Heart right ventricle (tissue), 16 donors: ENCODE measurements at regions of chr2 and their contacts with region 1.

Region 1: DNA sequence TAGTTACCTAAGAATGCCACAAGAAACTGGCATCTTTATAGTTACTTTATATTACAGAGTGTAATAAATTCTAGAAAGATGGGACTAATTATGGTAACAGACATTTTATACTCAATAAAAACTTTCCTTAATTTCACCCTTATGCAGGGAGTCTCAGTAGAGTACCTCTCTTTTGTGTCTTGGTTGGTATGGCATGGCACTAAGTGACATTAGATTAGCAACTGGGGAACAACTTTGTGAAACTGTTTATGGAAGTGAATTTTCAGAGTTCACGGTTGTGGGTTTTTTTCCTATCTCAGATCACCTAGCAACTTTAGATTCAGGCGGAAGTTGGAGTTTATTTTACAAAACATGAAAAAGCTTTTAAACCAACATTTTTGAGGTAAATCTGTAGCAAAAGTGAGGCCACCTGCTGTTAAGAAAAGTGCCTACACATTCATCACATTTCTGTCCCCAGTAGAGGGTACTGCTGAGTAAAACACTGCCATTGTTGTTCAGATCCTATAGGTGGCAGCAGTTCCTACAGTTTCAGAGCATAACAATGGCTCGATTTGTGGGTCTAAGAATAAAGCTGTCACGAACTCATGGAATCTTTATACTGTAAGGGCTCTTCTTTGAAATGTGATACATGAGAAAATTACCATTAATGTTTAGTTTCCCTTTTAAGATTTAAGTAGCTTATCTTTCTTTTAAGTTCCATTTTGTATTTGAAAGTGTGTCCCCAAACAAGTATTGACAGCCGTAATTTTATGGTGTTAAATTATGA is 117.6 kb downstream of the CAMKMT start:
- DNase-seq: peak in 1 of 2 donors; percentile 51
- ATAC-seq: peak; percentile 80 to 92 (median 88)
- H3K4me3 ChIP-seq: no peak overlapping the region
- H3K27ac ChIP-seq: no peak overlapping the region
- H3K4me1 ChIP-seq: peaks cover 0 to 5% (median 0%) of the 10 kb centered on the region in 9 donors
- H3K27me3 ChIP-seq: no peaks in the 10 kb centered on the region
- CTCF ChIP-seq: peak; percentile 84 to 100 (median 98)

Region 2: GRCh38 chr2:44044281-44044720 is 435.0 kb before region 1 on chr2:
- intact Hi-C with region 1: loop called in 4 of 10 experiments (anchors 5 to 10 kb)
- DNase-seq: peak; percentile 78 to 81
- ATAC-seq: peak; percentile 79 to 98 (median 96)
- H3K4me3 ChIP-seq: no peak overlapping the region
- H3K27ac ChIP-seq: no peak overlapping the region
- H3K4me1 ChIP-seq: peaks cover 0 to 7% (median 3%) of the 10 kb centered on the region in 9 donors
- H3K27me3 ChIP-seq: peaks cover 0 to 4% (median 0%) of the 10 kb centered on the region in 7 donors
- CTCF ChIP-seq: peak; percentile 46 to 94 (median 88)

Region 3: DNA sequence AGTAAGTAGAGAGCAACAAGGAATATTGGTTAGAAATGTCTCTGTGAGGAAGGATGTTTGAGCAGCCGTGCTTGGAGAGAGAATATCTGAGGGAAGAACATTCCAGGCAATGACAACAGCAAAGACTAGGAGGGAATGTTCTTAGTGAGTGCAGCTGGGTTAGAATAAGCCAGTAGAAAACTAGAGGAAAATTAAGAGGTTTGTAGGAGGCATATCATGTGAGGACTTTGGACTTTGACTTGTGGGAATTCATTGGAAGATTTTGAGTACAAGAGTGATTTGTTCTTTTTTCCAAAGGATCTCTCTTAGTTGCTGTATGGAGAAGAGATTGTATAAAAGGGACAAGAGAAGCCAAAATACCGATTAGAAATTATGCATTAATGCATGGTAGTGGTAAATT is 263.5 kb before region 1 on chr2:
- intact Hi-C with region 1: no loop called
- DNase-seq: no peak
- ATAC-seq: no peak
- H3K4me3 ChIP-seq: no peak overlapping the region
- H3K27ac ChIP-seq: no peak overlapping the region
- H3K4me1 ChIP-seq: no peaks in the 10 kb centered on the region
- H3K27me3 ChIP-seq: no peaks in the 10 kb centered on the region
- CTCF ChIP-seq: no peak

Region 4: DNA sequence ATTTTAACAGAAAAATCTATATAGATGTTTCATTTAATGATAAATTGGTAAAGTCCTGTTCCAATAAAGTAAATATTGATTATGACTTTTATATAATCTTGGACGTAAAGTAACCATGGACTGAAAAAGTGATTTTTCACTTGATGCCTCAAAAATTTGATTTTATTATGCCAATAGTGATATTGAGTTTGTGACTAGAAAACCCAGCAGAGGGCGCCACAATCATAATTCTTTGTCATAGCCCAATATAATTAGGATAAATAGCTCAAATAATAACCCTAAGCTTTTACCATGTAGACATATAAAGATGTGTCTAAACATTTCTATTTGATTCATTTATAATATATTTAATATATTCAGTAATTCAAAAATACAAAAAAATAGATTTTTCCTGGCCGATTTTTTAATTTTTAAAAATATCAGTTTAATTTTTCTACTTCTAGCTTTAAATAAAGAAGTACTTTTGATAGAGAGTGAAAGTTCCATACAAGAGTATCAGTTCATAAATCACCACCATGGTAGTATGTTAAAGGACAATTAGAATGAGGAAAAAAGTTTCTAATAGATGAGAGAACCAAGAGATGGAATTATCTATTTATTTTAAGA is 86.9 kb before region 1 on chr2:
- intact Hi-C with region 1: loop called in 3 of 10 experiments (anchors 5 to 10 kb)
- DNase-seq: peak in 1 of 2 donors; percentile 29
- ATAC-seq: no peak
- H3K4me3 ChIP-seq: no peak overlapping the region
- H3K27ac ChIP-seq: no peak overlapping the region
- H3K4me1 ChIP-seq: no peaks in the 10 kb centered on the region
- H3K27me3 ChIP-seq: no peaks in the 10 kb centered on the region
- CTCF ChIP-seq: peak in 8 of 9 donors; percentile 25 to 75 (median 65)

Region 5: DNA sequence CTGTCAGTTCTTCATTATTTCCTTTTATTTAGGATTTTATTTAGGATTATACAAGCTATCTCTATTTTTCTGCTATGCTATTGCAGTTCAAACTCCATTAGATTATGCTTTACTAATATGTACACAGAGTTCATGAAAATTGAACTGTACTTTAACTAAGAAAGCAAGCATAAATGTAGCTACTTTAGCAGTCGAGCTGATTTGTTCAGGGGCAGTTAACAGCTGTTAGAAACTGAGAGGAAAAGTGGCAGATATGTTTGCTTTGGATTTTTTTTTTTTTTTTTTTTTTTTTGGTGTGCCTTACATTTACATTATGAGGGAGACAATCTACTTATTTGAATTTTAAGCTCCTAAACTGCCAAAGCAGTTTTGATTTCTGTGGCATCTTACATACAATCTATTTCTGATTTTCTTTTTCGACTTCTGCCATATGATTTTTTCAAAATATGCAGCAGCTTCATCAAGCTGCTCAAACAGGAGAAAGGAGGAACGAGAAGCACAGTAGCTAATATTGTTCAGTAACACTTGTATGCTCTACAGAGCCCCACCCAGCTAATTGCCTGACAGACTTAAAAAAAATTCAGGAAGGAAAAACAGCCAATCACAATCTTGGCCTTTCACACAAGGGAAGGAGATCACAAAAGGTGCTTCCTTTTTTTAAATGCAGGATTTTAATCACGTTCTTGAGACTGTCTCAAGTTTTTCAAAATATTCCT is 228.8 kb after region 1 on chr2:
- intact Hi-C with region 1: loop called in 3 of 10 experiments (anchors 10 kb)
- DNase-seq: no peak
- ATAC-seq: peak in 4 of 8 donors; percentile 56 to 77 (median 73)
- H3K4me3 ChIP-seq: peak overlapping the region in 1 of 10 donors; percentile 3
- H3K27ac ChIP-seq: no peak overlapping the region
- H3K4me1 ChIP-seq: peaks cover 0 to 17% (median 7%) of the 10 kb centered on the region in 9 donors
- H3K27me3 ChIP-seq: no peaks in the 10 kb centered on the region
- CTCF ChIP-seq: no peak

Region 6: DNA sequence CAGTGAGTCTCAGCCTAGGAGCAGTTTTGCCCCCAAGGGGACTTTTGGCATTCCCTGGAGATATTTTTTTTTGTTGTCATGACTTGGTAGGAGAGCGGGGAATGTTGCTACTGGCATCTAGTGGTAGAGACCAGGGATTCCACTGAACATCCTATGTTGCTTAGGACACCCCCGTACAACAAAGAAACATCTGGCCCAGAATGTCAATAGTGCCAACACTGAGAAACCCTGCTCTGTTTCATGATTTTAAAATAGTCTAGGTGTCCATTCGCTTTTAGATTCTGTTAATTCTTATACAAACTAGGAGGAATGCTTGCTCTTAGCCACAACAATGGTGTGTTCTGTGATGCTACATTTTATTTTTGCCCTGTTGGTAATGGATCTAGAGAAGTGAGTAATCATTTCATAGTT is 236.4 kb after region 1 on chr2:
- intact Hi-C with region 1: loop called in 5 of 10 experiments (anchors 5 to 10 kb)
- DNase-seq: peak in 1 of 2 donors; percentile 17
- ATAC-seq: peak in 5 of 8 donors; percentile 37 to 64 (median 39)
- H3K4me3 ChIP-seq: no peak overlapping the region
- H3K27ac ChIP-seq: no peak overlapping the region
- H3K4me1 ChIP-seq: peaks cover 0 to 11% (median 0%) of the 10 kb centered on the region in 9 donors
- H3K27me3 ChIP-seq: no peaks in the 10 kb centered on the region
- CTCF ChIP-seq: peak in 7 of 9 donors; percentile 42 to 67 (median 52)

Region 7: DNA sequence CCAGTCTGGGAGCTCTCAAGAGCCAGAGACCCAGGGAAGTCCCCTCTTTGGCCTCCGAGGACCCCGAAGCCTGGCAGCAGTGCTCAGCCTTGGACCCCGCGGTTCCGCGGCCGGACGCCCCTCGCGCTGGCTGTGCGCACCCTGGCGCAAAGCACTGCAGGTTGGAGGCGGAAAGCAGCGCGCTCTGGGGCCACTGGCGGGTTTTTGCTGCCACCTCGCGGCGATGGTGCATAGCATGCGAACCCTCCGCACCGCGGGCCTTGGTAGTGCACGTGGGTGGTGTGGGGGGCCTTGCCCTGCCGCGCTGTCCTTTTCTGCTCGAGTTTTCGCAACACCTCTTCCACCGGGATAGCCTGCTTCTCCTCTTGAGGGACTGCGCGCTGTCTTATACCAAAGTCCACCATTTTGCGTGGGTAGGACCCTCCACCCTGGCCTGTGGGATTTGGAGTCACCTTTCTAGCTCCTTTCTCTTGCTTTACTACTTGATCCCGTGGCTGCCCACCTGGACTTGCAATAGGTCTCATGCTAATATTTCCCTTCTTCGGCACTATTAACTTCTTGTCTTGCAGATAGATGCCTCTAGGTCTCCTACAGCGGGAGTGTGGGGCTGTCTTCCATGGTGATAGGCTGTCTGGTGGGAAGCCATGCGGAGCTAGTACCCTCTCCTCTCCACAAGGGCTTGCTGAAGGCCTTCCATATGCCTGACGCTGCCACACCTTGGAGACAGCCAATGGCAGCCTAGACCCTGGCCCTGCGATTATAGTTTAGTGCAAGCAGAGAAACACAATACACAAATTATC is 476.5 kb after region 1 on chr2:
- intact Hi-C with region 1: loop called (anchors 1 to 5 kb)
- DNase-seq: peak; percentile 61 to 79
- ATAC-seq: peak; percentile 72 to 91 (median 84)
- H3K4me3 ChIP-seq: peak overlapping the region in 9 of 10 donors; percentile 13 to 49 (median 38)
- H3K27ac ChIP-seq: no peak overlapping the region
- H3K4me1 ChIP-seq: peaks cover 15 to 37% (median 29%) of the 10 kb centered on the region in 9 donors
- H3K27me3 ChIP-seq: peaks cover 14 to 98% (median 80%) of the 10 kb centered on the region in 7 donors
- CTCF ChIP-seq: peak; percentile 62 to 95 (median 91)

Region 8: GRCh38 chr2:44964752-44965236 is 485.5 kb after region 1 on chr2:
- intact Hi-C with region 1: loop called in 3 of 10 experiments (anchors 5 kb)
- DNase-seq: no peak
- ATAC-seq: no peak
- H3K4me3 ChIP-seq: no peak overlapping the region
- H3K27ac ChIP-seq: no peak overlapping the region
- H3K4me1 ChIP-seq: peaks cover 0 to 11% (median 0%) of the 10 kb centered on the region in 9 donors
- H3K27me3 ChIP-seq: peaks cover 0 to 67% (median 46%) of the 10 kb centered on the region in 7 donors
- CTCF ChIP-seq: peak in 2 of 9 donors; percentile 6 to 21